Breast epithelium (tissue), 4 donors: ENCODE measurements at regions of chr5 and their contacts with region 1.

Region 1: DNA sequence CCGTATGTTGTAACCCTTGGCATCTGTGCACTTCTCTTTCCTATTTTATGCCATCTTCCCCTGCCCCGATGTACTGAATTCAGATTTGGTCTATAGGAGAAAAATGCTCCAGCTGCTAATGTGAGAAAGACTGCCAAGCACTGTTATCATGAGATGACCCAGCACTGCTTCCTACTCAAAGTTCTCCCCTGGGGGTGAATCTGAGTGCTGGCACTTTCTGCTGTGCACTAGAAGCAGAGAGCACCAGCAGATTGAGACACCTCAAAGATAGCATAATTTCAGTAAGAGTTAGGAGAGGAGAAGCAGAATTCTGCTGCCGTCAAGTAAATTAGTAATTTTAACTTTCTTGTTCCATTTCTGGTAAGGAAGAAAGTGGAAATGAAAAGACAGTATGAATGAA is 92.8 kb upstream of the ACOT12 start:
- DNase-seq: no peak
- H3K4me3 ChIP-seq: no peak overlapping the region
- H3K27ac ChIP-seq: no peak overlapping the region
- H3K4me1 ChIP-seq: no peaks in the 10 kb centered on the region
- H3K27me3 ChIP-seq: no peaks in the 10 kb centered on the region
- CTCF ChIP-seq: no peak
- POLR2A ChIP-seq: no peak

Region 2: GRCh38 chr5:81371354-81371876 is 115.3 kb before region 1 on chr5:
- intact Hi-C with region 1: no loop called
- DNase-seq: no peak
- H3K4me3 ChIP-seq: no peak overlapping the region
- H3K27ac ChIP-seq: no peak overlapping the region
- H3K4me1 ChIP-seq: no peaks in the 10 kb centered on the region
- H3K27me3 ChIP-seq: no peaks in the 10 kb centered on the region
- CTCF ChIP-seq: no peak
- POLR2A ChIP-seq: no peak

Region 3: GRCh38 chr5:81994679-81995078 is 508.0 kb after region 1 on chr5:
- intact Hi-C with region 1: loop called (anchors 5 kb)
- DNase-seq: no peak
- H3K4me3 ChIP-seq: no peak overlapping the region
- H3K27ac ChIP-seq: no peak overlapping the region
- H3K4me1 ChIP-seq: no peaks in the 10 kb centered on the region
- H3K27me3 ChIP-seq: no peaks in the 10 kb centered on the region
- CTCF ChIP-seq: no peak
- POLR2A ChIP-seq: no peak